Cardiac septum (tissue), 1 donor: ENCODE measurements at regions of chr6 and their contacts with region 1.

Region 1: DNA sequence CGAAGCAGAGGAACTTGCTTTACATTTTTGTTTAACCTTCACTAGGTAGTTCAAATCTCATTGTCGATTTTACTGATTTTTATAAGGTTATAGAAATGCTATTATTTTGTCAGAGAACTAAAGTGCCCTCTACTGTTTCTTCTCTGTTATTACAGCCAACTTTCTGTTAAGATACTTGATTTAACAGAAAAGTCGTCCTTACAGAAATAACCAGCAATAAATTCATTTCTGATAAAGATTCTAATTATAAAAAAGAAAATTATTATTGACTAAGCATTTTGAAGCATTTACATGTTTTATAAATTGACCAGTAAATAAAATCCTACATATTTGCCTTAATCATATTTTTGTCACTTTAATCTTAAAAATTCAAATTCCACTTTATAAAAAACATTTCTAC is 60.8 kb downstream of the OGFRL1 start:
- DNase-seq: no peak

Region 2: GRCh38 chr6:71107911-71108420 is 241.4 kb before region 1 on chr6:
- intact Hi-C with region 1: no loop called
- DNase-seq: no peak

Region 3: GRCh38 chr6:71197780-71198179 is 151.6 kb before region 1 on chr6:
- intact Hi-C with region 1: loop called (anchors 5 kb)
- DNase-seq: no peak

Region 4: GRCh38 chr6:71404145-71404966 is 55.0 kb after region 1 on chr6:
- intact Hi-C with region 1: no loop called
- DNase-seq: no peak

Region 5: GRCh38 chr6:71727632-71728294 is 378.4 kb after region 1 on chr6:
- intact Hi-C with region 1: no loop called
- DNase-seq: no peak